Activated CD8-positive, alpha-beta T cell treated with anti-CD3 and anti-CD28 coated beads for 36 hours (primary cell): ENCODE measurements at regions of chr14 and their contacts with region 1.

Region 1: GRCh38 chr14:64478634-64479250 is 13.4 kb downstream of the AKAP5 start:
- DNase-seq: no peak
- ATAC-seq: no peak
- H3K4me3 Mint-ChIP-seq: no peak overlapping the region
- H3K27ac Mint-ChIP-seq: no peak overlapping the region
- H3K4me1 Mint-ChIP-seq: peaks cover 26% of the 10 kb centered on the region
- H3K27me3 Mint-ChIP-seq: no peaks in the 10 kb centered on the region
- CTCF ChIP-seq: peak; percentile 64

Region 2: GRCh38 chr14:64338616-64339316 is 140.0 kb before region 1 on chr14:
- CTCF ChIA-PET with region 1: interaction called, 26 read pairs
- POLR2A ChIA-PET with region 1: no interaction called
- intact Hi-C with region 1: loop called (anchors 10 kb)
- DNase-seq: peak; percentile 94
- ATAC-seq: peak; percentile 87
- H3K4me3 Mint-ChIP-seq: peak overlapping the region; percentile 96
- H3K27ac Mint-ChIP-seq: peak overlapping the region; percentile 96
- H3K4me1 Mint-ChIP-seq: peaks cover 19% of the 10 kb centered on the region
- H3K27me3 Mint-ChIP-seq: no peaks in the 10 kb centered on the region
- CTCF ChIP-seq: no peak

Region 3: DNA sequence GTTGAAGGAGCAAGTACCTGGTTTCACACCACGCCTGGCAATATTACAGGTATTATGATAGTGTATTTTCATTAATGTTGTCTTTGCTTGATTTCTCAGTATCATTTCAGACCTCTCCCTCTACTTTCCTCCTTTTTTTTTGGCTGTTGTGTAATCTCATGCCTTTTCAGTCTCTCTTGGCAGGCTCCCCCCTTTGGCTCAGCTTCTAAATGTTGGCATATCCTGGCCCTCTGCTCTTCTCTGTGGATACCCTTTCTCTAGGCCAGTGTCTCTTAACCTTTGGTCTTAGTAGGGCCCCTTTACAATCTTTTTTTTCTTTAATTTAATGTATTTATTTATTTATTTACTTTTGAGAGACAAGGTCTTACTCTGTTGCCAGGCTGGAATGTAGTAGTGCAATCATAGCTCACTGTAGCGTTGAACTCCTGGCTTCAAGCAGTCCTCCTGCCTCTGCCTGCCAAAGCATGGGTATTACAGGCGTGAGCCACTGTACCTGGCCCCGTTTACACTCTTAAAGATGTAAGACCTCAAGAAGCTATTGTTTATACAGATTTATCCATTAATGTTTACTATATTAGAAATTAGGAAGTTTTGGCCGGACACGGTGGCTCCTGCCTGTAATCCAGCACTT is 77.8 kb before region 1 on chr14:
- CTCF ChIA-PET with region 1: interaction called, 14 read pairs
- POLR2A ChIA-PET with region 1: no interaction called
- intact Hi-C with region 1: no loop called
- DNase-seq: no peak
- ATAC-seq: no peak
- H3K4me3 Mint-ChIP-seq: no peak overlapping the region
- H3K27ac Mint-ChIP-seq: no peak overlapping the region
- H3K4me1 Mint-ChIP-seq: peaks cover 11% of the 10 kb centered on the region
- H3K27me3 Mint-ChIP-seq: no peaks in the 10 kb centered on the region
- CTCF ChIP-seq: no peak

Region 4: DNA sequence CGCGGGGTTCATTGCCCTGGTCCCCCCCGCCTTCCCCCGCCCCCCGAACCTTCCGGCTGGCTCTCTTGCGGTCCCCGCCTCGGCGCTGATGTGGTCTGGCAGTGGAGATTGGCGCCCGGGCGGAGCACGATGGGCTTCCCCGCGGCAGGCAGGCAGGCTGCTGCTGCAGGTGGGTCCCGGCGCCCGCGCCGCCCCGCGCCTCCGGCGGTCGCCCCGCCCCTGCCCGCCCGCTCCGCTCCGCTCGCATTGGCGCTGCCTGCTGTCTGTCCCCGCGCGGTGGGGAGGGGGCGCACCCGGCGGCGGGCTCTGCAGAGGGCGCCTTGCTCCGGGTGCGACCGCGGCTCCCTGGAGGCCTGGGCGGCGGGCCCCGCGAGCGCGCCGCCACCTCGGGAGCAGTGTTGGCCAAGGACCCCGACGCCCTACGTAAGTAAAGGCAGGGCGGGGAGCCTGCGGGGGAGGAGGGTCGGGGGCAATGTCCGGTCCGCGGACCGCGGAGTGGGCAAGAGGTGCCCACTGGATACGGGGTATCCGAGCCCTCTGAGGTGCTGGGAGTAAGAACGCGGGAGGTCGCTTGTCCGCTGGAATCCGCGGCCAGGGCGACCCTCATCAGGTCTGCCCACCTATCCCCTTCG is 13.4 kb before region 1 on chr14 and contains the start of gene AKAP5:
- CTCF ChIA-PET with region 1: interaction called, 26 read pairs
- POLR2A ChIA-PET with region 1: interaction called, 4 read pairs
- intact Hi-C with region 1: no loop called
- DNase-seq: peak; percentile 70
- ATAC-seq: peak; percentile 85
- H3K4me3 Mint-ChIP-seq: peak within 1 kb of the TSS; percentile 71
- H3K27ac Mint-ChIP-seq: peak within 1 kb of the TSS; percentile 73
- H3K4me1 Mint-ChIP-seq: peaks cover 39% of the 10 kb centered on the region
- H3K27me3 Mint-ChIP-seq: no peaks in the 10 kb centered on the region
- CTCF ChIP-seq: no peak
- total RNA-seq, gene AKAP5: 1.3 to 1.6 TPM

Region 5: GRCh38 chr14:64496764-64497163 is 18.0 kb after region 1 on chr14:
- CTCF ChIA-PET with region 1: interaction called, 14 read pairs
- POLR2A ChIA-PET with region 1: interaction called, 7 read pairs
- intact Hi-C with region 1: no loop called
- DNase-seq: no peak
- ATAC-seq: no peak
- H3K4me3 Mint-ChIP-seq: no peak overlapping the region
- H3K27ac Mint-ChIP-seq: peak overlapping the region; percentile 19
- H3K4me1 Mint-ChIP-seq: peaks cover 60% of the 10 kb centered on the region
- H3K27me3 Mint-ChIP-seq: no peaks in the 10 kb centered on the region
- CTCF ChIP-seq: no peak

Region 6: GRCh38 chr14:64503478-64504309 is 25.0 kb after region 1 on chr14 and contains the start of gene ZBTB25:
- CTCF ChIA-PET with region 1: interaction called, 29 read pairs
- POLR2A ChIA-PET with region 1: interaction called, 12 read pairs
- intact Hi-C with region 1: no loop called
- DNase-seq: peak; percentile 97
- ATAC-seq: peak; percentile 64
- H3K4me3 Mint-ChIP-seq: peak within 1 kb of the TSS; percentile 79
- H3K27ac Mint-ChIP-seq: peak within 1 kb of the TSS; percentile 99
- H3K4me1 Mint-ChIP-seq: peaks cover 31% of the 10 kb centered on the region
- H3K27me3 Mint-ChIP-seq: no peaks in the 10 kb centered on the region
- CTCF ChIP-seq: no peak
- total RNA-seq, gene ZBTB25: 58.6 to 58.8 TPM

Region 7: DNA sequence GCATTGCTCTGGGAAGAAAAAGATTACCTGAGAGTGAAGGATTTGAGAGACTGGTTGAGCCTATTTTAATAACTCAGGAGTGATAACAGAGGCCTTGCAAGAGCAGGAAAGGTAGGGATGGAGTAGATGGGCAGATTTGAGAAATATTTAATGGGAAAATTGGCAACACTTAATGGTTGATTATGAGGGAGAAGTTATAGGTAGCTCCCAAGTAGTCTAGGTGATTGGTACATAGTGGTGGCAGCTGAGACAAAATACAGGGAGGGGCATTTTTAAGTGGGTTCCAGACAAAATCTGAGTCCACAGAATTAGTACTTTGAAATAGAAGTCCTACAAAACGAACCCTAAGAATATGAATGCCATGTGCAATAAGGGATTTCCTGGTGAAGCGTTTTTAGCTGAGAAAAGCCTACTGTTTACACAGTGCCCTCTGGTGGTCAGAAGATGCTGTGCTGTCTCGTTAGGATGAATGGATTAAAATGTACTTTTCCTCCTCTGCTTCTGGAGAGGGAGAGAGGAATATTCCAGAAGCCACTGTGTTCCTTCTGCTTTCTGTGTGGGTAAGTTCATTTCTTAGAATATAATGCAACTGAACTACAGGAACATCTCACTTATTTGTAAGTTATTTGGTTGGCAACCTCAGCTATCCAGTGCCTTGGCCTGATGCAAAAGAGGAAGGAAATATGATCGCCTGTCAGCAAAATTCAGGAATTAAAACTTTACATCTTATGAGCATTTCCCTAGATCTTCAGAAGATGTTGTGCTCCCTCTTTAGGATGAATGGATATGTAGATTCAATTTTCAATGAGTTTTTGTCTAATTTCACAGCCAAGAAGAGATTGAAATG is 32.3 kb after region 1 on chr14:
- CTCF ChIA-PET with region 1: interaction called, 29 read pairs
- POLR2A ChIA-PET with region 1: no interaction called
- intact Hi-C with region 1: no loop called
- DNase-seq: peak; percentile 81
- ATAC-seq: peak; percentile 28
- H3K4me3 Mint-ChIP-seq: peak overlapping the region; percentile 41
- H3K27ac Mint-ChIP-seq: peak overlapping the region; percentile 76
- H3K4me1 Mint-ChIP-seq: peaks cover 70% of the 10 kb centered on the region
- H3K27me3 Mint-ChIP-seq: no peaks in the 10 kb centered on the region
- CTCF ChIP-seq: peak; percentile 90